RWPE1 (cell line): ENCODE measurements at regions of chr1 and their contacts with region 1.

Region 1: DNA sequence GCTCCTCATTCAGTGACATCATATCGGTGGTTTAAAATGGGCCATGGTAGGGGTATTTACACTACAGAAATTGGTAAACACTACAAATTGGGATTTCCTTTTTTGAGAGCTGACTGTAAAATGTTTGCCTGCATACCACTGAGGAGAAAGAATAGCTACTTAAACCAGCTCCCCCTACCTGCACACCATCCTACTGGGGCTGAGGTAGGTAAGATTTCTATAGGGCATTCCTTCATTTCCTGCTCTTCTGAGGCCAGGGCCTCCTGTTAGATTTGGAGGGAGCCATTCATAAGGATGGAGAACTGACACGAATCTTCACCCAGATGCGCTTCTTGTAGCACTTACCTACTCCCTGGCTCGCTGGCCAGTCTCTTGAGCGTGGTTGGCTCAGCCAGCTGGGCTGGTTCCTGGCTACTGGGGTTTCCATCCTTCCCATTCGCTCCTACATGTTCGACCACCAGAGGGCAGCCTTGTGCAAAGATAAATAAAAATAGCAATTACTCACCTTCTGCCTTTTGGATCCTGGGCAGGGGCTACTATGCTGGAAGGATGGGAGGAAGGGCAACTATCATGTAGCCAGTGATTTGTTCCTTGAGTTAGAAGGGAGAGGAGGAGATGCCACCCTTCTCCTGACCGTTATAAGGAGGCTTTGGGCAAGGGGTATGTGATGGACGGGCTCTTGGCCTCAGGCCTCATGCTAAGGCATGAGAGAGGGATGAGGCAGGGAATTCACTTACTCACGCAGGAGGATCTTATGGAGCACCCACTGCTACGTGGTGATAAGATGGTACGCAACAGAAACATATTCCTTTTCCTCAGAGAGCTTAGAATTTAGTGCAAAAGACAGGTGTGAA is 10.7 kb downstream of the OPTC start:
- DNase-seq: peak; percentile 93
- H3K27ac ChIP-seq: no peak overlapping the region
- CTCF ChIP-seq: peak; percentile 79

Region 2: GRCh38 chr1:203252678-203253077 is 251.9 kb before region 1 on chr1:
- CTCF ChIA-PET with region 1: no interaction called
- POLR2A ChIA-PET with region 1: no interaction called
- DNase-seq: no peak
- H3K27ac ChIP-seq: no peak overlapping the region
- CTCF ChIP-seq: no peak

Region 3: DNA sequence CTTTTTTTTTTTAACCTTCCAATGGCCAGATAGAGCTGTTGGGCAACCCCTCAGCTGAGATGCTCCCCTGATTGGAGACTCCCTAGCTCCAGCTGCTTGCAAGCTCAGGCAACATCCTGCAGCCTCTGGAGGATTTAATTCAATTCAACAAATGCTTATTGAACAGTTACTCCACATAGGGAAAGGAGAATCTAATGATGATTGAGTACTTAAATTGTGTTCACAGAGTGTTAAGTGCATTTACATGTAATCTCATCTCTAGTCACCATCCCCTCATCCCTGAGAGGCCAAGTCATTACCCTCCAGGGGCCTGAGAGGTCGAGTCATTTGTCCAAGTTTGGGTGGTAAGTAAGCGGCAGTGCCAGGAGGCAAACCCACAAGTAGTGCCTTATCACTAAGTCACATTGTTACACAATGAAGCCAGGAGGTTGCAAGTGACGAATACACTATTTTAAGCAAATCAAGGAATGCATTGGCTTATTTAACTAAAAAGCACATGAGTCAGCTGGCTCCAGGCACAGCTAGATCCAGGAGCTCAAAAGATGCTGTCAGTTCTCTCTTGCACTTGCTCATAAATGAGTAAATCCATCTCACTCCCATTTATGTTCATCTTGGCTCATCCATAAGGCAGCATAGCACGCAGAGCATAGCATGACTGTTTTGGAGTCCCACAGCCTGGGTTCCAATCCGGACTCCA is 53.6 kb after region 1 on chr1:
- CTCF ChIA-PET with region 1: interaction called, 10 read pairs
- POLR2A ChIA-PET with region 1: no interaction called
- DNase-seq: peak; percentile 96
- H3K27ac ChIP-seq: peak overlapping the region; percentile 76
- CTCF ChIP-seq: no peak

Region 4: GRCh38 chr1:203702130-203702577 is 197.5 kb after region 1 on chr1:
- CTCF ChIA-PET with region 1: interaction called, 64 read pairs
- POLR2A ChIA-PET with region 1: no interaction called
- DNase-seq: peak; percentile 81
- H3K27ac ChIP-seq: no peak overlapping the region
- CTCF ChIP-seq: peak; percentile 77

Region 5: GRCh38 chr1:203888807-203889251 is 384.2 kb after region 1 on chr1:
- CTCF ChIA-PET with region 1: no interaction called
- POLR2A ChIA-PET with region 1: no interaction called
- DNase-seq: peak; percentile 93
- H3K27ac ChIP-seq: no peak overlapping the region; the same call in 1 of the 2 replicates
- CTCF ChIP-seq: no peak